MCF 10A (cell line): ENCODE measurements at regions of chr19 and their contacts with region 1.

Region 1: DNA sequence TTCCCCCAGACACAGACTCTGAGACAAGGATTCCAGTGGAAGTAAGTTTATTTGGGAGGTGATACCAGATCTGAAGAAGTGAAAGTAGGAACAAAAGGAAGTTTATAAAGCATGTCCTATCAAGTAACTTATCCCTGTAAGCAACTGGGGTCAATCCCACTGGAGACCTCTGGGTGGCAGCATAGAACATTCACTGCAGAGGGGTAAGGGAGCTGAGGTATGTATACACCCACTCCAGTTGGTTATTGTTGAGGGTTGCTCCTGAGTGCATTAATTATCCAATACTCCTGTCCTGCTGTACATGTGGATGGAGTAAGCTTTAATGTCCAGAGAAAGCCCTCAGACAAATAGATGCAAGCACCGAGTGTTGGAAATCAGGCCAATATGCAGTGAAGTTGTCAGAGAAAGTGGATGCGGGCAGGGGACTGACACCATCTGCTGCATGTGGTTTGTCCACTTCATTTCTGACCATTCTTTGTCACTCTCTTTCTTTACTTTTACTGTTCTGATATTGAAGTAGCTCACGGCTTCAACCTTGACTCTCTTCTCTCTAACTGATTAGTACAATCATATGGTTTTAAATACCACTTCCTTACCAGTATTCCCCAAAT is 46.7 kb downstream of the NOTCH3 start:
- DNase-seq: peak; percentile 58
- H3K4me3 Mint-ChIP-seq: no peak overlapping the region
- H3K27ac Mint-ChIP-seq: no peak overlapping the region
- H3K4me1 Mint-ChIP-seq: peaks cover 6% of the 10 kb centered on the region
- H3K27me3 Mint-ChIP-seq: peaks cover 24% of the 10 kb centered on the region
- CTCF ChIP-seq: peak; percentile 45

Region 2: DNA sequence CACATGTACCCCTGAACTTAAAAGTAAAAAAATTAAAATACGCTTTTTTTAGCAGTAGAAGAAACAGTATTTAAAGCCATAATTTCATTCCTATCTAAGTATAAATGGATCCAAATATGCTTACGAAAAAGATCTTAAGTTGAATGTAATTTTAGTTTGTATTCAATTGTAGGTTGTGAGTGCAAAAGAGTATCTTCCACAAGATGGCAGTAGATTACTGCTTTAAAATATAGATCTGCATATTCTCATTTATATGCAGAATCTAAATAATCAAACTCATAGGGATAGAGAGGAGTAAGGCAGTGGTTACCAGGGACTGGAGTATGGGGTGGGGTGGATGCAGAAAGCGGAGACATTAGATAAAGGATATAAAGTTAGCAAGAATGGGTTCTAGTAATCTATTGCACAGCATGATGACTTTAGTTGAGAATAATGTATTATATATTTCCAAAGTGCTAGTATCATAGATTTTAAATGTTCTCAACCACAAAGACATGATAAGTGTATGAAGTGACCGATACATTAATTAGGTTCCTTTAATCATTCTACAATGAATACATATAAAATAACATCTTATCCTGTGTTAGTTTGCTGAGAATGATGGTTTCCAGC is 282.4 kb before region 1 on chr19:
- CTCF ChIA-PET with region 1: interaction called, 3 read pairs
- POLR2A ChIA-PET with region 1: no interaction called
- intact Hi-C with region 1: loop called (anchors 2 kb)
- DNase-seq: peak; percentile 20
- H3K4me3 Mint-ChIP-seq: no peak overlapping the region
- H3K27ac Mint-ChIP-seq: no peak overlapping the region
- H3K4me1 Mint-ChIP-seq: no peaks in the 10 kb centered on the region
- H3K27me3 Mint-ChIP-seq: peaks cover 40% of the 10 kb centered on the region
- CTCF ChIP-seq: peak; percentile 49

Region 3: DNA sequence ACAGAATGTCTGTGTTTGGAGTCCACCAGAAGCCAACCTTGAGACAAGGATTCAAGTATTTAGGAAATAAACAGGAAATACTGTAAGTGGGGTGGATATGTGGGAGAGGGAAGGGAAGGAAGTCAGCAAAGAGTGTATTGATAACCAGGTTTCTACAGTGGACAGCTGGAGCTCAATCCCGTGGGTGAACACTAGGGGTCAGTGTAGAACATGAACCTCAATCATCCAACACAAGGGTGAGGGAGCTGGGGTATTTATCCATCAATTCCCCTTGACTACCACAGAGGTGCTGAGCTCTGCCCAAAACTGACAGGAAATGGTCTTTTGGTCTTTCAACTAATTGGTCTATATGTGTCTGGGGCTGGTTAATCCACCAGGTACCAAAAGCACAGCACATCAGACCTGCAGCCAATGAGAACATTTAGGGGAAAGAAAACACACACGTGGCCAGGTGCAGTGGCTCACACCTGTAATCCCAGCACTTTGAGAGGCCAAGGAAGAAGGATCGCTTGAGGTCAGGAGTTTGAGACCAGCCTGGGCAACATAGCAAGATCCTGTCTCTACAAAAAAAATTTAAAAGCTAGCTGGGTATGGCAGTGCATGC is 52.5 kb before region 1 on chr19:
- CTCF ChIA-PET with region 1: interaction called, 13 read pairs
- POLR2A ChIA-PET with region 1: no interaction called
- intact Hi-C with region 1: no loop called
- DNase-seq: peak; percentile 45
- H3K4me3 Mint-ChIP-seq: no peak overlapping the region
- H3K27ac Mint-ChIP-seq: no peak overlapping the region
- H3K4me1 Mint-ChIP-seq: peaks cover 5% of the 10 kb centered on the region
- H3K27me3 Mint-ChIP-seq: no peaks in the 10 kb centered on the region
- CTCF ChIP-seq: peak; percentile 55

Region 4: DNA sequence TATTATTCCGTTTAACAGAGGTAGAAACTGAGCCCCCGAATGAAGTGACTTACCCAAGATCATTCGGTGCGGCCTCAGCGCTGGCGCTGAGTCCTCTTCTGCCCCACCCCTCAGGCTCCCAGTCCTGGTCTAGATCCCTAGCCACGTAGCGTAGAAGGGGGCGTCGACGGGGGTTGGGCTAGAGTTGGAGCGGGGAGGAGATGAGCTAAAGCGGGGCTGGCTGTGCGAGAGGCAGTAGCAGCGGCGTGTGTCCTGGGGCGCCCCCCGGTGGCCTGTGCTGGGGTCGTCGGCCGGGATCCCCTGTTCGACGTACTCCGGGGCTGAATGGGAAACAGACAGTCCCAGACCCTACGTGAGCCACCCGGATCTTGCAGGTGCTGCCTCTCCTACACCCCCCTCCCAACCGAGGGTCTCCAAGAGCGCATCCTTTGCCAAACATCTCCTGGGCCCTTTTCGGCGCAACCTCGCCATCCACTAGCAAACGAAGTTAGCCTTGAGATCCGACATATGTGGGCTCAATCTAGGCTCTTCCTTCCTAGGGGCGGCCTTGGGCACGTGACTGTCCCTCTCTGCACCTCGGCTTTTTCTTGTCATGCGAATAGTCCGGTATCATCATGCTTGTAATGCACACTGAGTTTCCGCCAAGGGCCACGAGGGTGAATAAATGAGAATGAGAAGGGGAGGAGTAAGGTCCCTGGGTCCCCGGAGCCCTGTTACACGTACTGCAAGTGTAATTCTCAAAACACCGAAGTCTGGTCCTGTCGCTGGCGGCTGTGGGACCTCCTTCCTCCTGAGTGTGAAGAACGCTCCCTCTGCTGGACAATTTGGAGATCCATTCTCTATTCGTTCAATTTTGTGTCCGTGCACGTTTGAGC is 401.9 kb after region 1 on chr19:
- CTCF ChIA-PET with region 1: interaction called, 6 read pairs
- POLR2A ChIA-PET with region 1: no interaction called
- intact Hi-C with region 1: loop called (anchors 5 kb)
- DNase-seq: peak; percentile 90
- H3K4me3 Mint-ChIP-seq: peak overlapping the region; percentile 60
- H3K27ac Mint-ChIP-seq: no peak overlapping the region
- H3K4me1 Mint-ChIP-seq: peaks cover 11% of the 10 kb centered on the region
- H3K27me3 Mint-ChIP-seq: no peaks in the 10 kb centered on the region
- CTCF ChIP-seq: peak; percentile 81